ENCODE measurements at regions of chr14 and their contacts with region 1.

Region 1: DNA sequence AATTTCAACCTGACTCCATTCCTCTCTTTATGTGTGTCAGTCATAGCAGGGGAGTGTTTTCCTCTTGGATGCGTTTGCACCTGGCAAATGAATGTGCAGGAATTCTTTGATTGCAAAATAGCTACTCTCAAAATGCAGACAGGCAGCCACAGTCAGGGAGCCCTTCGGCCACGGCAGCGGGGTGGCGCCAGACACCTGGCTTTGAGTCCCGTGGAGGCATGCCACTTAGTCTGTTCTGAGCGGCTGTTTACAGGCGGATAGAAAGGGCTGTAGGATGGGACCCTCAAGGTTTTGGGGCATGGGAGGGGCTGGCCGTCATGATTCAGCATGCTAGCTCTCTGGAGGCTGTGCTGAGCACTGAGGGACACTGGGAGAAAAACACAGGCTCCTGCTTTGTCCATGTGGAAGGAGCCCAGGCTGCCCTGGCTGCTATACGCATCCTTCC is 117.1 kb downstream of the SLC25A47 start:
- DNase-seq: peak; percentile 66
- H3K4me3 ChIP-seq: peak overlapping the region; percentile 0 to 12; a peak in 2 of 4 replicates
- H3K27ac ChIP-seq: peak overlapping the region; percentile 68 to 100
- H3K4me1 ChIP-seq: peaks cover 34 to 95% of the 10 kb centered on the region in 2 experiments
- H3K27me3 ChIP-seq: no peaks in the 10 kb centered on the region
- CTCF ChIP-seq: peak; percentile 72
- EP300 ChIP-seq: no peak
- RAD21 ChIP-seq: peak; percentile 89

Region 2: GRCh38 chr14:100341301-100342031 is 98.7 kb before region 1 on chr14:
- CTCF ChIA-PET with region 1: no interaction called
- POLR2A ChIA-PET with region 1: no interaction called
- DNase-seq: peak; percentile 14
- H3K4me3 ChIP-seq: no peak overlapping the region
- H3K27ac ChIP-seq: peak overlapping the region in 1 of 2 experiments; percentile 75; a peak in 2 of 4 replicates
- H3K4me1 ChIP-seq: peaks cover 0 to 5% of the 10 kb centered on the region in 2 experiments; a peak in 2 of 4 replicates
- H3K27me3 ChIP-seq: no peaks in the 10 kb centered on the region
- CTCF ChIP-seq: no peak
- EP300 ChIP-seq: no peak
- RAD21 ChIP-seq: no peak

Region 3: DNA sequence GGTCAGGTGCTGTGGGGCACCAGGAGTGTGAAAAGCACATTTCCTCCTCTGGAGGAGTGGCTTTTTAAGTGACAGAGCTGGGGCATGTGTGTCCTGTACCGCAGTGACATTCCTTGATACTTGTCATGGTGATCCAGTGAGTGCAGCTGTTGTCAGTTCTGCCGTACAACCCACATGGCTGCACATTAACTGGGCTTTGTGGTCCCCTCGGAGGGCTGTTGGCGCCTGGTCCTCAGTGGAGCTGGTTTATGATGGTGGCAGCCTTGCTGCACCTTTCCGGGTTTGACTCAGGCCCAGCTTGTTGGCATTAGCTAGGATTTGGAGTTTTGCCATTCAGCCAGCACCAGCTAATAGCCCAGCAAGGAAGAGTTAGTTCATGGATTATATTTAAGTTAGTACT is 40.1 kb before region 1 on chr14:
- CTCF ChIA-PET with region 1: interaction called, 5 read pairs
- POLR2A ChIA-PET with region 1: interaction called, 17 read pairs
- DNase-seq: peak; percentile 53
- H3K4me3 ChIP-seq: no peak overlapping the region
- H3K27ac ChIP-seq: peak overlapping the region; percentile 10 to 100; a peak in 3 of 4 replicates
- H3K4me1 ChIP-seq: peaks cover 5 to 75% of the 10 kb centered on the region in 2 experiments; a peak in 2 of 4 replicates
- H3K27me3 ChIP-seq: no peaks in the 10 kb centered on the region
- CTCF ChIP-seq: no peak
- EP300 ChIP-seq: 0 out of 4 replicates have a peak, but pooled peaks of 1 of the 2 experiments have one; percentile 4
- RAD21 ChIP-seq: no peak

Region 4: GRCh38 chr14:100540141-100540925 is 100.1 kb after region 1 on chr14:
- CTCF ChIA-PET with region 1: interaction called, 12 read pairs
- POLR2A ChIA-PET with region 1: interaction called, 91 read pairs
- DNase-seq: peak; percentile 85
- H3K4me3 ChIP-seq: no peak overlapping the region
- H3K27ac ChIP-seq: peak overlapping the region in 1 of 2 experiments; percentile 56; a peak in 1 of 4 replicates
- H3K4me1 ChIP-seq: peaks cover 0 to 46% of the 10 kb centered on the region in 2 experiments; a peak in 1 of 4 replicates
- H3K27me3 ChIP-seq: no peaks in the 10 kb centered on the region
- CTCF ChIP-seq: peak; percentile 48
- EP300 ChIP-seq: no peak
- RAD21 ChIP-seq: peak; percentile 42

Region 5: DNA sequence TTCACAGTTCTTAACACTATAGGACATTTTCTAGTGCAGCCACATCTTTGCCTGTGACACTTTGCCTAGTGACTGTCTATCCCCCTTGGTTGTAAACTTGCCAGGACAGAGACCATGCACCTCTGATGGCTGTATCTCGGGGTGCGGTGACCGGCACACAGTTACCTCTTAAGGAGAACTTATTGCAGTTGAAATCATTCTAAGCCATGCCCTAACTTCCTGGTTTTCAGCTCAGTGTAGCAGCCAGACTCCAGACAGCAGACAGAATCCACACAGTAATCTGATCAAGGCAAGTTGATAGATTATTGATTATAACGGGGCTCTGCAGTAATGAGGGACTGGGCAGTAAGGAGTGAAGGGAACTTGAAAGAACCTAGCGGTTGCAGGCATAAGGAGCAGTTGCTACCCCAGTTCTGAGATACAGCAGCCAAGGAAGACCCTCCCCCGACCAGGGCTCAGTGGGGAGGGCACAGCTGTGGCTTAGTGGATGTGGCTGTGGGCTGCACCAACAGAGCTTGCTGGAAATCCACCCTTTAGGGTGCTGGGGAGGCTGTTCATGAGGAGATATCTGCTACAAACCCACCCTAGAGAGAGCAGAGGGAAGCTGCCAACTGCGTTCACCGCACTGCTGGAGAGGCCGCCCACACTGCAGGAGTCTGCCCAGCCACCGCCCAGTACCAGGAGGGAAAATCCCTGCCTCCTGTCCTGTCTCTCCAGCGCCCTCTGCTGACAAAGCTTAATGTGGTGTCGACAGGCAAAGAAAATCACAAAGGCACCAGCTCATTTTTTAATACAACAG is 205.2 kb after region 1 on chr14:
- CTCF ChIA-PET with region 1: interaction called, 58 read pairs
- POLR2A ChIA-PET with region 1: no interaction called
- DNase-seq: peak; percentile 84
- H3K4me3 ChIP-seq: peak overlapping the region in 1 of 2 experiments; percentile 39; a peak in 1 of 4 replicates
- H3K27ac ChIP-seq: peak overlapping the region in 1 of 2 experiments; percentile 76; a peak in 2 of 4 replicates
- H3K4me1 ChIP-seq: peaks cover 5 to 34% of the 10 kb centered on the region in 2 experiments; a peak in 2 of 4 replicates
- H3K27me3 ChIP-seq: no peaks in the 10 kb centered on the region
- CTCF ChIP-seq: peak; percentile 53
- EP300 ChIP-seq: no peak
- RAD21 ChIP-seq: peak; percentile 86

Region 6: DNA sequence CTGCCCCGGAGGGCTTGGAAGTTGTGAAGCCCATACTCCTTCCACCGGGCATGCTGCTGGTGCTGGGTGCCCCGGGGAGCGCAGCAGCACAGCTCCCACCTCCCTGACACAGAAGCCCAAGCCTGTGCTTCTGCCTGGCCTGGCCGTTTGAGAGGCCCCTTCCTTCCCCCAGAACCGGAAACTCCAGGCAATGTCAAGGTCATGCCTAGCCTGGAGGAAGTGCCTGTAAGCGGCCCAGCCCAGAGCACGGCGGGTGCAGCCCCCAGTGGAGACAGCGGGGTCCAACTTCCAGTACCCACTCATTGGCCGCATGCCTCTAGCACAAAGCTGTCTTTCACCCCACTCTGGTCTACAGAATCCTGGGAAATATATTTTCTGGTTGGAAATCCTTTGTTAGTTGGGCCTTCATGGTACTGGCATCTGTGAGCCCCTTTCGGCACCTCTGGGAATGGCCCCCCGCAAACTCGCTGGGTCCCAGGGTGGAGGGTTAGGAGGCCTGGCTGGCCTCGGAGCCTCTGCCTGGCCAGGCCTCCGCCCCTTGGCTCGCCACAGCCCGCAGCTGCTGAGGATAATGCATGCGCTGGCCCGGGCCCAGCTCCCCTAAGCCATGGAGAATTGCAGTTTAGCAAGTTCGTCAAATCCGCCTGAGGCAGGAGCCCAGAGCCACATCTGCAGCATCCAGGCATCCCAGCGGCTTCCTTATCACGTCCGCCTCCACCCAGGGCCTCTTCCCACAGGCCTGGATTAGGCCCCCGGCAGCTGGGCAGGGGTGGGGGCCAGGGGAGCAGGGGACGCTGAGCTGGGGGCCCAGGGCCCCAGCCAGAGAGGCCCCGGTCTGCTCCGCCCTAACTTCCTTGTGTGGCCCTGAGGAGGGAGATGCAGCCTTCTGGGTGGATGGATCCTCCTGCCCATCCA is 237.6 kb after region 1 on chr14:
- CTCF ChIA-PET with region 1: interaction called, 19 read pairs
- POLR2A ChIA-PET with region 1: interaction called, 18 read pairs
- DNase-seq: peak; percentile 89
- H3K4me3 ChIP-seq: no peak overlapping the region
- H3K27ac ChIP-seq: peak overlapping the region in 1 of 2 experiments; percentile 99; a peak in 3 of 4 replicates
- H3K4me1 ChIP-seq: peaks cover 0 to 97% of the 10 kb centered on the region in 2 experiments; a peak in 2 of 4 replicates
- H3K27me3 ChIP-seq: no peaks in the 10 kb centered on the region
- CTCF ChIP-seq: no peak
- EP300 ChIP-seq: peak in 1 of 2 experiments; percentile 77; a peak in 2 of 4 replicates
- RAD21 ChIP-seq: peak; percentile 2; the same call in 1 of the 2 replicates

Region 7: GRCh38 chr14:101235335-101236103 is 795.3 kb after region 1 on chr14:
- CTCF ChIA-PET with region 1: interaction called, 14 read pairs
- POLR2A ChIA-PET with region 1: no interaction called
- DNase-seq: peak; percentile 95
- H3K4me3 ChIP-seq: no peak overlapping the region
- H3K27ac ChIP-seq: peak overlapping the region in 1 of 2 experiments; percentile 58; a peak in 1 of 4 replicates
- H3K4me1 ChIP-seq: peaks cover 0 to 37% of the 10 kb centered on the region in 2 experiments; a peak in 1 of 4 replicates
- H3K27me3 ChIP-seq: no peaks in the 10 kb centered on the region
- CTCF ChIP-seq: peak; percentile 70
- EP300 ChIP-seq: no peak
- RAD21 ChIP-seq: peak; percentile 93